Activated CD4-positive, alpha-beta memory T cell treated with anti-CD3 and anti-CD28 coated beads for 36 hours (primary cell): ENCODE measurements at regions of chr9 and their contacts with region 1.

Region 1: DNA sequence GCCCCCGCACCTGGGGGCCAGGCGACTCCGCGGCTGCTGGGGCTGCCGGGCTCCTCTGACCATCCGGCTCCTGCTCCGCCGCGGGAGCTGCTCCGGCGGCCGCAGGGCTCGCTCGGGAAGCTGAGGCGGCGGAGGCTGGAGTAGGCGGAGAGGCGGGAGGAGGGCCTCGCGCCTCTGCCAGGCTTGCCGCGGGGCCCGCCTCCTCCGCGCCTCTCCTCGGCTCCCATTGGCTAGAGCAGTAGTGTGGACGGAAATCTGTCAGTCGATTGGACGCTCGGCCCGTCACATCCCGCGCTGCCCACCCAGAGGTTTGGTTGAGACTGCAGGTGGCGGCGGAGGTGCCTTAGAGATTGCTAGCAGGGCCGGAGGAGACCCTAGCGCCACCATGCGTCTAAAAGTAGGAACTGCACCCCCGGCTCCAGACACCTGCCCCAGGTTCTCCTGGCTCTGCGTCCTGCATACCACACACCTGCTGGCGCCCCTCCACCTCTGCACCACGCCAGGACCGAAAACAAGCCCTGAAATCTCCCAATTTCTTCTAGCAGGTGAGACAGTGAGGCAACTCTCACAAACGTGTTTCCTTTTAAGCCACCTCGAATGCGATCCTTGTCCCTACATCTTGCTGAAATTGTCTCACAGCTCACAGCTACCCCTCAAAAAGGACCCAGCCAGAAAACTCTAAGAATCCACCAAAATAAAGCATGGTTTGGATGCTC is at the start of gene SCAI:
- DNase-seq: peak; percentile 99
- H3K4me3 Mint-ChIP-seq: peak within 1 kb of the TSS; percentile 82
- H3K27ac Mint-ChIP-seq: peak within 1 kb of the TSS; percentile 24
- H3K4me1 Mint-ChIP-seq: peaks cover 31% of the 10 kb centered on the region
- H3K27me3 Mint-ChIP-seq: no peaks in the 10 kb centered on the region
- total RNA-seq, gene SCAI: 9.0 to 10.8 TPM

Region 2: DNA sequence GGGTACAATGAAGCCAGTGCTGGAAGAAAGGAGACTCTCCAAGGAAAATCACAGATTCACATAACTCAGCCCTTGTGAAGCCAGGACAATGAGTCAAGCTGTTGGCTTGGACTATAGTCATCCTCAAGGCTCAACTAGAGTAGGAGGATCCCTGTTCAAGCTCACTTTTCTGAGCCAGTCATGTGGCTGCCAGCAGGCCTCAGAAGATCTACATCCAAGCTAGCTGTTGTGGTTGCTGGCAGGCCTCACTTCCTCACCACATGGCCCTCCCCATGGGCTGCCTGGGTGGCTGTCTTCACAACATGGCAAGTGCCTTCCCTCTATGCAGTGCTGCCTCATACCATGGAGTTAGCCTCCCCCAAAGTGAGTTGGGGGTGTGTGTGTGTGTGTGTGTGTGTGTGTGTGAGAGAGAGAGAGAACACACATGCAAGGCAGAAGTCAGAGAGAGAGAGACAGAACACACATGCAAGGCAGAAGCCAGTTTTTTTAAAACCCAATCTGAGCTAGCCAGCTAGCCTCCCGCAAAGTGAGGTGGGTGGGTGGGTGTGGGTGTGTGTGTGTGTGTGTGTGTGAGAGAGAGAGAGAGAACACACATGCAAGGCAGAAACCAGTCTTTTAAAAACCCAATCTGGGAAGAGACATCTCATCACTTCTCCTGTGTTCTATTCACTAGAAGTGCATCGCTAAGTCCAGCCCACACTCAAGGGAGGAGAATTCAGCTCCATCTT is 17.4 kb before region 1 on chr9:
- CTCF ChIA-PET with region 1: interaction called, 20 read pairs
- POLR2A ChIA-PET with region 1: no interaction called
- intact Hi-C with region 1: no loop called
- DNase-seq: peak; percentile 91
- H3K4me3 Mint-ChIP-seq: peak overlapping the region; percentile 30
- H3K27ac Mint-ChIP-seq: peak overlapping the region; percentile 92
- H3K4me1 Mint-ChIP-seq: peaks cover 25% of the 10 kb centered on the region
- H3K27me3 Mint-ChIP-seq: no peaks in the 10 kb centered on the region

Region 3: GRCh38 chr9:125227761-125228160 is 84.2 kb after region 1 on chr9:
- CTCF ChIA-PET with region 1: no interaction called
- POLR2A ChIA-PET with region 1: no interaction called
- intact Hi-C with region 1: no loop called
- DNase-seq: no peak
- H3K4me3 Mint-ChIP-seq: no peak overlapping the region
- H3K27ac Mint-ChIP-seq: no peak overlapping the region
- H3K4me1 Mint-ChIP-seq: no peaks in the 10 kb centered on the region
- H3K27me3 Mint-ChIP-seq: no peaks in the 10 kb centered on the region